ENCODE measurements at regions of chr18 and their contacts with region 1.

Region 1: GRCh38 chr18:26383454-26384270 is 157.4 kb downstream of the TAF4B start:
- DNase-seq: peak; percentile 52
- ATAC-seq: peak; percentile 84
- H3K4me3 ChIP-seq: no peak overlapping the region
- H3K27ac ChIP-seq: no peak overlapping the region
- H3K4me1 ChIP-seq: peaks cover 14 to 15% of the 10 kb centered on the region in 2 experiments
- H3K27me3 ChIP-seq: no peaks in the 10 kb centered on the region
- CTCF ChIP-seq: peak; percentile 28 to 78 (median 61); a peak in 5 of 6 replicates
- POLR2A ChIP-seq: no peak
- RAD21 ChIP-seq: peak; percentile 59

Region 2: DNA sequence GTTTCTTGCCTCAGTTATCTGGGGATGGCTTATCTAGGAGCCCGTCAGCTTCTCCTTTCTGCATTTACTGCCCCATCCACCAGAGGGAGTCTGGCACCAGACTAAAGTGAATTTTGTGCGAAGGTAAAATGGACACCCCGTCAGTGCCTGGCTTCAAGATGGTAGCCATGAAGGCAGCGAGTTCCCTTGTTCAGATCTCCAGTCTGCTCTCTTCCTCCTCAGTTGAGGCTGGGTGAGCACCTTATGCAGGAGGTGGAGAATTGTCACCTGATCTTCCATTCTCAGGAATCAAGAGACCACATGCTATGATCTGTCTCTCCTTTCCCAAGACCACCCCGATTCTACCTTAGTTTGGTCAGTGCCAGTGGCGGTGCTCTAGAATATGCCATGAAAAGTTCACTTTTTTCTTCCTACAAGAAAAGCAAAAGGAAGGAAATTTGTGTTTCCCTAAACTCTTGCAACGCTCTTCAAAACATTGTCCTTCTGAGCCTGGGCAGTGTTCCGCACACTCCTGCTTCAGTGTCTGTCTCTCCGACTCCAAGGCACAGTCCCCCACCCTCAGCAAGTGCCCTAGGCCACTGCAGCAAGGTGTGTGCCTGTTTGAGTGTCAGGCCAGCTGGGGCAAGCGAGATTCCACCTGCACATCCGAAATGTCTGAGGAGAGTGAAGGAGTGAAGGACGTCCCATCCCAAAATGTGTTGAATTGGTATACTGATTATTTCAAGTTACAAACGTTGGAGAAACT is 461.8 kb before region 1 on chr18:
- CTCF ChIA-PET with region 1: interaction called, 4 read pairs
- POLR2A ChIA-PET with region 1: no interaction called
- RAD21 ChIA-PET with region 1: no interaction called
- intact Hi-C with region 1: loop called (anchors 10 kb)
- DNase-seq: peak; percentile 57
- ATAC-seq: peak; percentile 90
- H3K4me3 ChIP-seq: no peak overlapping the region
- H3K27ac ChIP-seq: no peak overlapping the region
- H3K4me1 ChIP-seq: peaks cover 0 to 4% of the 10 kb centered on the region in 2 experiments; a peak in 1 of 4 replicates
- H3K27me3 ChIP-seq: no peaks in the 10 kb centered on the region
- CTCF ChIP-seq: peak; percentile 57 to 82 (median 81); a peak in 5 of 6 replicates
- POLR2A ChIP-seq: no peak
- RAD21 ChIP-seq: peak; percentile 77

Region 3: GRCh38 chr18:26370037-26370436 is 13.6 kb before region 1 on chr18:
- CTCF ChIA-PET with region 1: interaction called, 26 read pairs
- POLR2A ChIA-PET with region 1: no interaction called
- RAD21 ChIA-PET with region 1: no interaction called
- intact Hi-C with region 1: no loop called
- DNase-seq: no peak
- ATAC-seq: no peak
- H3K4me3 ChIP-seq: no peak overlapping the region
- H3K27ac ChIP-seq: no peak overlapping the region
- H3K4me1 ChIP-seq: no peaks in the 10 kb centered on the region
- H3K27me3 ChIP-seq: no peaks in the 10 kb centered on the region
- CTCF ChIP-seq: no peak
- POLR2A ChIP-seq: no peak
- RAD21 ChIP-seq: no peak

Region 4: GRCh38 chr18:26771524-26771923 is 387.9 kb after region 1 on chr18:
- CTCF ChIA-PET with region 1: no interaction called
- POLR2A ChIA-PET with region 1: no interaction called
- RAD21 ChIA-PET with region 1: no interaction called
- intact Hi-C with region 1: loop called (anchors 10 kb)
- DNase-seq: no peak
- ATAC-seq: peak; percentile 60
- H3K4me3 ChIP-seq: no peak overlapping the region
- H3K27ac ChIP-seq: no peak overlapping the region
- H3K4me1 ChIP-seq: no peaks in the 10 kb centered on the region
- H3K27me3 ChIP-seq: peaks cover 4% of the 10 kb centered on the region
- CTCF ChIP-seq: peak in 2 of 3 experiments; percentile 36 to 47; a peak in 3 of 6 replicates
- POLR2A ChIP-seq: no peak
- RAD21 ChIP-seq: peak; percentile 19; the same call in 1 of the 2 replicates

Region 5: DNA sequence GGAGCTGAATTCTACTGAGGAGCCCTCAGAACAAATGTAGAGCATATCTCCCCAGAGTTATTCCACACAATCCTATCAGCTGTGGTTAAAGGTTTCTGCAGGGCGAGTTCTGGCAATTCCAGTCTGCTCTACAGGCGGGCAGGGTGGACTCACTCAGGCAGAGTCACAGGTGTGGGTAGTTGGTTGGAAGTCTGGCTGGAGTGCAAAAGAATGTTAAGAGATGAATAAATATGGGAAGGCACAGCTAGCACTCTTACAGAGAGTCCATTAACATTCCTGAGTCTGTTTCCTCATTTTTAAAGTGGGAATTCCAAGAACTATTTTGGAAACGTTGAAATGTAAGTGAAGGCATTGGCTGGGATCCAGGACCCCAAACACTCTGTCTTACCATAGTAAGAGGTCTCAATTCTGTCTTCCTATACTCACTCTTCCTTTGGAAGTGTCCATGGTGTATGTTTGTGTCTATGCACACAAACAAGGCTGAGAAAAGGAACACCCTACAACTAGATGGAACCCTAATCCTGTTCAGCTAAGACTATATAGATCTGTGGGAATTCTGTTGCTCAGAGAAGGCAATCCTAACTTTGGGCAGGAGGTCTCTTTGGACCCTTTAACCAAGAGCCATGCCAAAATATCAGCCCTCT is 545.1 kb after region 1 on chr18:
- CTCF ChIA-PET with region 1: no interaction called
- POLR2A ChIA-PET with region 1: no interaction called
- RAD21 ChIA-PET with region 1: no interaction called
- intact Hi-C with region 1: no loop called
- DNase-seq: no peak
- ATAC-seq: no peak
- H3K4me3 ChIP-seq: no peak overlapping the region
- H3K27ac ChIP-seq: no peak overlapping the region
- H3K4me1 ChIP-seq: no peaks in the 10 kb centered on the region
- H3K27me3 ChIP-seq: no peaks in the 10 kb centered on the region; the same call in 1 of the 2 replicates
- CTCF ChIP-seq: no peak
- POLR2A ChIP-seq: no peak
- RAD21 ChIP-seq: no peak

Region 6: DNA sequence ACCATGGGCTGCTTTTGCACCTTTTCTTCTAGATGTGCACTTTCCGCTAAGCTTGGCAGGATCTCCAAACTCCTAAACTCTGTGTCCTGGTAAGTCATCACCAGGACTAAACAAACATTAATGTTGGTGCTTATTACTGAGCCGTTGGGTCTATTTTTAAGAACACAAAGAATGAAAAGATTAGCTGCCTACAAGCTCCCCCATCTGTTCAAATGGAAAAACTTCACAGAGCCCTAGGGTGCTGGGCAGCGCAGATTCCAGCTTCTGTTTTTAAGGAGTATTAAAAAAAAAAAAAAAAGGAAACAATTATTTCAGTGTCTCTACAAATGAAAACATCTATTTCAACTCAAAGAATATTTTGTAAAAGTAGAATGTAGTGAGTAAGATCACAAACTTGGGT is 579.6 kb after region 1 on chr18:
- CTCF ChIA-PET with region 1: interaction called, 4 read pairs
- POLR2A ChIA-PET with region 1: no interaction called
- RAD21 ChIA-PET with region 1: no interaction called
- intact Hi-C with region 1: loop called (anchors 10 kb)
- DNase-seq: no peak
- ATAC-seq: no peak
- H3K4me3 ChIP-seq: no peak overlapping the region
- H3K27ac ChIP-seq: no peak overlapping the region
- H3K4me1 ChIP-seq: no peaks in the 10 kb centered on the region
- H3K27me3 ChIP-seq: no peaks in the 10 kb centered on the region
- CTCF ChIP-seq: 0 out of 6 replicates have a peak, but pooled peaks of 1 of the 3 experiments have one; percentile 23
- POLR2A ChIP-seq: no peak
- RAD21 ChIP-seq: peak; percentile 40

Region 7: DNA sequence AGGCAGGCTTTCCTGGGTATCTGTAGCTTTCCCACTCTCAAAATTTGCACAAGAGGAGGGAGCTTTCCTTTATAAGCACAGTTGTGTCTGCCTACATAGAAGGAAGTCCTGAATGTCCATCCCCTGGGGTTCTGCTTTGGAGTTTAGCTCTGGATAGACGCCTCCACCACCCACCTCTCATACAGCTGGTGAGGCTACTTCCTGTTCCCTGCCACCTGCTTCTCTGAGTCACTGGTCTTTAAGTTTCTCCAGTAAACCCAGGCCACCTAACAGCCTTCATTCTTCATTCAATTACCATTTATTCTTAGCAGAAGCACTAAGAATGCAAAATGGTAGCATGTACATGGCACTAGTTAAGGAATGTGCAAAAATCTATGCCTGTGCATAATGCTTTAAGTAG is 1385.5 kb after region 1 on chr18:
- CTCF ChIA-PET with region 1: no interaction called
- POLR2A ChIA-PET with region 1: no interaction called
- RAD21 ChIA-PET with region 1: no interaction called
- intact Hi-C with region 1: no loop called
- DNase-seq: no peak
- ATAC-seq: no peak
- H3K4me3 ChIP-seq: no peak overlapping the region
- H3K27ac ChIP-seq: no peak overlapping the region
- H3K4me1 ChIP-seq: no peaks in the 10 kb centered on the region
- H3K27me3 ChIP-seq: no peaks in the 10 kb centered on the region
- CTCF ChIP-seq: no peak
- POLR2A ChIP-seq: no peak
- RAD21 ChIP-seq: no peak